Caco-2 (cell line): ENCODE measurements at regions of chr1 and their contacts with region 1.

Region 1: DNA sequence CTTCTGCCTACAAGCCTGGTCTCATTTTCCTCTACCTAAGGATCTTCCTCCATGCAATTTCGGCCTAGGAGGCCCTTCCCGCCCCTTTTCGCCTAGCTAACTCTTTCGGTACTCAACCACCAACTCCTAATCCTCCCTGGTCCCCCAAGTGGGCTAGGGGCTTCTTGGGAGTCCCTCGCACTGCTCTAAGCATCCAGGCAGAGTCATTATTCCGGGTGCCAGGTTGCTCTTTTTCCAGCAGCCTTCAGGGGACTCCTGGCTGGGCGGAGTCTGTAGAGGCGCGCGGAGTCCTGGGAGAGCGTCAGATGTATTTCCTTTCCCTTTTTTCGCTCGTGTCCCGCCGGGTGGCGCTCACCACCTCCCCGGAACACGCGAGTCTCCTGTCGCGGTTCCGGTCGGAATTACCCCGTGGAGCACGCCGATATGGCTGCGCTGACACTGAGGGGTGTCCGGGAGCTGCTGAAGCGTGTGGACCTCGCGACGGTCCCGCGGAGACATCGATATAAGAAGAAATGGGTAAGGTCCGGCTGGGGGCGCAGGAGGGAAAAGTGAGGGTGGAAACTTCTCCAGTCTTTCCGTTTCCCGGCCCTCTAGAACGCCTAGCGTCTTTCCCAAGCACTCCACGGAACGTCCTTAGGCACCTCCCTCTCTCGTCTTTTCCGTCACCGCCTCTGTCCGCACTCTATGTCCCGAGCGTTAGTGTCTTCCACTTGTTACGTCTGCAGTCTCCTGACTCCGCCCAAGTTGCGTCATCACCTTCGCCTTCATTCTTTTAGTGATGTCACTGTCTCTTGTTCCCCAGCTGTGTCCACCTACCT is at the start of gene NSUN4:
- DNase-seq: peak; percentile 84 to 87
- H3K4me3 ChIP-seq: peak within 1 kb of the TSS; percentile 69
- H3K4me3 Mint-ChIP-seq: peak within 1 kb of the TSS; percentile 93
- H3K27ac Mint-ChIP-seq: peak within 1 kb of the TSS; percentile 95
- H3K4me1 ChIP-seq: no peaks in the 10 kb centered on the region
- H3K4me1 Mint-ChIP-seq: peaks cover 18% of the 10 kb centered on the region
- H3K27me3 ChIP-seq: no peaks in the 10 kb centered on the region
- H3K27me3 Mint-ChIP-seq: no peaks in the 10 kb centered on the region
- CTCF ChIP-seq: peak; percentile 43 to 67
- total RNA-seq, gene NSUN4: 21.4 and 21.8 TPM in 2 replicates

Region 2: GRCh38 chr1:46247436-46248121 is 93.0 kb before region 1 on chr1 and contains the start of gene RAD54L:
- CTCF ChIA-PET with region 1: no interaction called
- POLR2A ChIA-PET with region 1: interaction called, 7 read pairs
- intact Hi-C with region 1: loop called (anchors 1 kb)
- DNase-seq: peak; percentile 96 to 99
- H3K4me3 ChIP-seq: peak within 1 kb of the TSS; percentile 64
- H3K4me3 Mint-ChIP-seq: peak within 1 kb of the TSS; percentile 96
- H3K27ac Mint-ChIP-seq: peak within 1 kb of the TSS; percentile 98
- H3K4me1 ChIP-seq: no peaks in the 10 kb centered on the region
- H3K4me1 Mint-ChIP-seq: peaks cover 6% of the 10 kb centered on the region
- H3K27me3 ChIP-seq: no peaks in the 10 kb centered on the region
- H3K27me3 Mint-ChIP-seq: no peaks in the 10 kb centered on the region
- CTCF ChIP-seq: no peak
- total RNA-seq, gene RAD54L: 29.1 and 30.6 TPM in 2 replicates

Region 3: GRCh38 chr1:46285730-46286477 is 54.7 kb before region 1 on chr1:
- CTCF ChIA-PET with region 1: no interaction called
- POLR2A ChIA-PET with region 1: no interaction called
- intact Hi-C with region 1: loop called (anchors 10 kb)
- DNase-seq: peak in 1 of 2 experiments; percentile 51
- H3K4me3 ChIP-seq: no peak overlapping the region
- H3K4me3 Mint-ChIP-seq: peak overlapping the region; percentile 37
- H3K27ac Mint-ChIP-seq: peak overlapping the region; percentile 74
- H3K4me1 ChIP-seq: peaks cover 21% of the 10 kb centered on the region
- H3K4me1 Mint-ChIP-seq: peaks cover 30% of the 10 kb centered on the region
- H3K27me3 ChIP-seq: no peaks in the 10 kb centered on the region
- H3K27me3 Mint-ChIP-seq: no peaks in the 10 kb centered on the region
- CTCF ChIP-seq: no peak

Region 4: GRCh38 chr1:46303038-46303871 is 37.4 kb before region 1 on chr1 and contains the starts of genes LRRC41 and UQCRH:
- CTCF ChIA-PET with region 1: interaction called, 6 read pairs
- POLR2A ChIA-PET with region 1: interaction called, 6 read pairs
- intact Hi-C with region 1: loop called (anchors 2 kb)
- DNase-seq: peak; percentile 93 to 94
- H3K4me3 ChIP-seq: peak within 1 kb of the TSS; percentile 52
- H3K4me3 Mint-ChIP-seq: peak within 1 kb of the TSS; percentile 98
- H3K27ac Mint-ChIP-seq: peak within 1 kb of the TSS; percentile 97
- H3K4me1 ChIP-seq: peaks cover 13% of the 10 kb centered on the region
- H3K4me1 Mint-ChIP-seq: peaks cover 14% of the 10 kb centered on the region
- H3K27me3 ChIP-seq: no peaks in the 10 kb centered on the region
- H3K27me3 Mint-ChIP-seq: no peaks in the 10 kb centered on the region
- CTCF ChIP-seq: no peak
- total RNA-seq, gene LRRC41: 41.7 and 43.5 TPM in 2 replicates
- total RNA-seq, gene UQCRH: 277 and 320 TPM in 2 replicates

Region 5: GRCh38 chr1:46352363-46352762 is 11.8 kb after region 1 on chr1:
- CTCF ChIA-PET with region 1: no interaction called
- POLR2A ChIA-PET with region 1: no interaction called
- intact Hi-C with region 1: no loop called
- DNase-seq: no peak
- H3K4me3 ChIP-seq: no peak overlapping the region
- H3K4me3 Mint-ChIP-seq: no peak overlapping the region
- H3K27ac Mint-ChIP-seq: no peak overlapping the region
- H3K4me1 ChIP-seq: no peaks in the 10 kb centered on the region
- H3K4me1 Mint-ChIP-seq: peaks cover 6% of the 10 kb centered on the region
- H3K27me3 ChIP-seq: no peaks in the 10 kb centered on the region
- H3K27me3 Mint-ChIP-seq: no peaks in the 10 kb centered on the region
- CTCF ChIP-seq: no peak